Activated naive CD4-positive, alpha-beta T cell treated with anti-CD3 and anti-CD28 coated beads for 36 hours (primary cell): ENCODE measurements at regions of chr2 and their contacts with region 1.

Region 1: GRCh38 chr2:208373460-208374089 is 33.0 kb upstream of the PTH2R start:
- DNase-seq: peak; percentile 45
- H3K4me3 Mint-ChIP-seq: no peak overlapping the region
- H3K27ac Mint-ChIP-seq: no peak overlapping the region
- H3K4me1 Mint-ChIP-seq: no peaks in the 10 kb centered on the region
- H3K27me3 Mint-ChIP-seq: peaks cover 2% of the 10 kb centered on the region

Region 2: DNA sequence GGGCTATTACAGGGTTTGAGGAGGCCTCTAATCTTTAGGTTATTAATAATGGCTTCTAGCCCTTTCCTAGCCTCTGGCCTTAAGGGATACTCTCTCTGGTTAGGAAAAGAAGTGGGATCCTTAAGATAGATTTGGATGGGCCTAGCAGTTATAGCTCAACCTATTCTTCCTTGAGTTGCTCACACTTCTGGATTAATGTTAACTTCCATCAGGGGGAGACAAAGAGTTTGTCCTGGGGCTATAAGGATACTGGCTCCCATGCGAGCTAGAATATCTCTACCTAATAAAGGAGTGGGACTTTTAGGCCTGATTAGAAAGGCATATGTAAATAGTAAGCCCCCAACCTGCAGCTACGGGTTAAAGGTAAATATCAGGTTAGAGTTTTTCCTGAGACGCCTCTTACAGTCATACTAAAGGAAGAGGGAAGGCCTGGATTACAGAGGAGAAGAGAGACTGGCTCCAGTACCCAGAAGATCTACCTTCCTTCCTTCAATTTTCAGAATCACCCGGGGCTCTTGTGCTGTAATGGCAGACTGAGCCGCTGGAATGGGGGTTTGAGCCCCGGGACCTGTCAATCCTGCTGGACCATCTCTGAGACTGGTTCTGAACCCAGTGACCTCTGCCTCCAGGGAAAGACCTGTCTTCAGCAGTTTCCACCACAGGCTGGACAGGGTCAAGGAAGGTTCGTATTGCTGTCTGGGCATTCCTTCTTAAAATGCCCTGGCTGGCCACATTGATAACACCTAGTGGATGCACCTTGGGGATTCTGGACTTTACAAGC is 18.9 kb after region 1 on chr2:
- CTCF ChIA-PET with region 1: interaction called, 3 read pairs
- intact Hi-C with region 1: loop called (anchors 1 kb)
- DNase-seq: no peak
- H3K4me3 Mint-ChIP-seq: no peak overlapping the region
- H3K27ac Mint-ChIP-seq: no peak overlapping the region
- H3K4me1 Mint-ChIP-seq: no peaks in the 10 kb centered on the region
- H3K27me3 Mint-ChIP-seq: peaks cover 8% of the 10 kb centered on the region

Region 3: DNA sequence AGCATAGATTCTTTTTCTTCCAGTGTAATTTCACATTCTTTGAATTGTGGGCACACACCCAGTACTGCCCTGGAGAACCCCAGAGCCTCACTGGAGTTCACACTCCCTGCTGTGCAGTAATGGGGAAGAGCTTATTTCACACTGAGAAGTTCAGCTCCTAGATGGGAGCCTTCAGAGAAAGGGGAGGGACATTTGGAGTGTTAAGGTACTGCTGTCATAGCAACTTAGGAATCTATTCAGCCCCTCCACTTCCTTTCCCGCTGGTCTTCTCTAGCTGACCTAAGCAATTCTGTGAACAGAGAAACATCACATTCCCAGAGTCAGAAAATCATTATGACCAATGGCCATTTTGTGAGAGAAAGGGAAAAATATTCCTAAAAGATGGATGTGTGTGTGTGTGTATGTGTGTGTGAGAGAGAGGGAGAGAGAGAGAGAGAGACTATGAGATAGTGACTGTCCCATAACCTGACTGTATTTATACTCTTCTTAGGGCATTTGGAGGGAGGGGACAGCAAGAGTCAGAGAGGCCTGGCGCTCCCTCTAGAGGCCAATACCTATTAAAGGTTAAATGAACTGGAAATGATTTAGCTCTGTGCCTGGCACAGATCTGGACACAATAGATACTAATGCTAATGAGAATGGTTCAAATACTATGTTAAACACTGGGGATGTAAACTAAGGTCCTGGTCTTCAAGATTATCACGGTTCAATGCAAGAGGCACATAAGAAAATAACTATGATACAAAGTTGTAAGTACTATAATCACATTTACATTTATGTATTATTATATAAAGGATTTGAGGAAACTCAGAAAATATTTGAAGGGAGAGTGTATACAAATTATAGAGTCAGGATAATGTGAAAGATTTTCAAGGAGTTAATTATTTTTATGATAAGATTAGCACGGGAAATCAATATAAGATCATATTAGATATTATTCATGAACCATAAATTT is 1587.4 kb after region 1 on chr2:
- CTCF ChIA-PET with region 1: interaction called, 3 read pairs
- intact Hi-C with region 1: loop called (anchors 10 kb)
- DNase-seq: peak; percentile 63
- H3K4me3 Mint-ChIP-seq: no peak overlapping the region
- H3K27ac Mint-ChIP-seq: no peak overlapping the region
- H3K4me1 Mint-ChIP-seq: no peaks in the 10 kb centered on the region
- H3K27me3 Mint-ChIP-seq: no peaks in the 10 kb centered on the region